ENCODE measurements at regions of chr17 and their contacts with region 1.

Region 1: DNA sequence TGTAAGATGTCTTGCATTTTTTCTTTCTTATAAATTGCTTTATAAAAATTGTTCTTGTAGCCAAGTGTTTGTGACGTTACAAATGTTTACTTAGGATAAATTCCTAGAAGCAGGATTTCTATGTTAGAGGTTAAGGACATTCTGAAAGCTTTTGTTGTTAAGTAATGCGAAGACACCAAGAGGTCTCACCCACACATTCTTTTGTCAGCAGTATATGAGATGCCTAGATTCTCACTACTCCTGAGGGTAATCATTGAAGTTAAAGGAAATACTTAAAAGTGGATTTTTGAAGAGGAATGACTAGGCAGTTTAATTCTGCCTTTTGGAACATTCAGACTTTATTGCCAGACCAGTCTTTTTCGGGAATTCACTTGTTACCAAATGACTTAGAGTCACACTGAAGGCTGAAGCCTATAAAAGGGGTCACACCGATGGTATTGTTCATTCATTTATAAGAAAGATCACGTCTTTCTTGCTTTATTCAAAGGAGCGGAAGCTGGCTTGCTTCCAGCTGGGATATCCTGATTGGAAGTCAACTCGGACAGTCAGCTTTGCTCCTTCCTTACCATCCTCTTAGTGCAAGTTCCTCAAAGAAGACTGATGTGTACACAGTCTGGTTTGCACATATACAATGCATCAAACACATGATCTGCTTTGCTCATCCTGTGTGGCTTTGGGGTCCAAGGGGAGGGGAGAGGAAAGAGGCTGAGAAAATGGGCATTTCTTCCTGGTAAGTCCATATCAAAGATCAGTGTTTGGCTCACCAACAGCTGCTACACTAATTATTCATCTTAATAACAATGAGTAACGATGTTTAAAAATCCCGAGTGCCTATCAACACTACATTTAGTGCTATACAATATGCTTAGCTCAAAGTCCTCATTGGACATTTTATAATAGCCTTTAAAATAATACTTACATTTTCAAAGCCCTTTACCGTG is 160.0 kb downstream of the MAP2K6 start:
- DNase-seq: no peak
- H3K4me3 Mint-ChIP-seq: no peak overlapping the region
- H3K27ac Mint-ChIP-seq: no peak overlapping the region
- H3K4me1 Mint-ChIP-seq: no peaks in the 10 kb centered on the region
- H3K27me3 Mint-ChIP-seq: peaks cover 5% of the 10 kb centered on the region

Region 2: DNA sequence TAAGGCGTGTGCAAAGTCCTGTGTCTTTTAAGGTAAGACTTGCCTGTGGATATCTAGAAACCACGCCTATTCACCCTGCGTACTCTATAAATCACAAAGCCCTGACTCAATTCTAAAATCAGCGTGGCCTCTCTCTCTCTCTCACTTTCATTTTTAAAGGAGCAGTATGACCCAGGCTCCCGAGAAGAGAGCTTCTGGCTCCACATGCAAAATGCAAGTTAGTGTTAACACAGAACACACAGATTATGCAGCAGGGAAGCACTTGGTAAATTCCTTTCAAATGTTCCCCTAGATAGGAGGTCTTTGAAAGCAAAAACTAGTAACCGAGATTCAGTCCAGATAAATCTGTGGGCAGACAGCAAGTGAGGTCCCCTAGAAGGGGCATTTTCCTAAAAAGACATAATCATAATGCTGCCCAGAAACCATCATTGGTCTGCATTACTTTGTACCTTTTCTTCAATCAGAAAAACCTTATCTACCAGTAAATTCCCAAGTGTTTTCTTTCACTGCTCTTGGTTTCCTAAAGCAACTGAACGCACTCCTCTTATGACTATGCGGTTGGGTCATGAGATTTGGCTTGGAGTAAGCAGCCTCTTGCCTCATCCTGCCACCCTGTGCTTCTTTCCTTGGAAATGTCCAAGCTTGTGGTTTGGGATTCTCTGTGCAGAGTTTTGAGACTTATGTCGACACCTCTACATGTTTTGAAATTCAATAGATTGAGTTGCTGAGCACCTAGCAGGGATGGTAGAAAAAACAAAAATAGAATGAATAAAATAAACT is 563.1 kb after region 1 on chr17:
- CTCF ChIA-PET with region 1: no interaction called
- intact Hi-C with region 1: loop called (anchors 2 kb)
- DNase-seq: peak; percentile 59
- H3K4me3 Mint-ChIP-seq: no peak overlapping the region
- H3K27ac Mint-ChIP-seq: no peak overlapping the region
- H3K4me1 Mint-ChIP-seq: peaks cover 18% of the 10 kb centered on the region
- H3K27me3 Mint-ChIP-seq: no peaks in the 10 kb centered on the region

Region 3: GRCh38 chr17:70144260-70144846 is 569.8 kb after region 1 on chr17:
- CTCF ChIA-PET with region 1: interaction called, 9 read pairs
- intact Hi-C with region 1: loop called (anchors 1 kb)
- DNase-seq: no peak
- H3K4me3 Mint-ChIP-seq: no peak overlapping the region
- H3K27ac Mint-ChIP-seq: no peak overlapping the region
- H3K4me1 Mint-ChIP-seq: no peaks in the 10 kb centered on the region
- H3K27me3 Mint-ChIP-seq: peaks cover 2% of the 10 kb centered on the region

Region 4: DNA sequence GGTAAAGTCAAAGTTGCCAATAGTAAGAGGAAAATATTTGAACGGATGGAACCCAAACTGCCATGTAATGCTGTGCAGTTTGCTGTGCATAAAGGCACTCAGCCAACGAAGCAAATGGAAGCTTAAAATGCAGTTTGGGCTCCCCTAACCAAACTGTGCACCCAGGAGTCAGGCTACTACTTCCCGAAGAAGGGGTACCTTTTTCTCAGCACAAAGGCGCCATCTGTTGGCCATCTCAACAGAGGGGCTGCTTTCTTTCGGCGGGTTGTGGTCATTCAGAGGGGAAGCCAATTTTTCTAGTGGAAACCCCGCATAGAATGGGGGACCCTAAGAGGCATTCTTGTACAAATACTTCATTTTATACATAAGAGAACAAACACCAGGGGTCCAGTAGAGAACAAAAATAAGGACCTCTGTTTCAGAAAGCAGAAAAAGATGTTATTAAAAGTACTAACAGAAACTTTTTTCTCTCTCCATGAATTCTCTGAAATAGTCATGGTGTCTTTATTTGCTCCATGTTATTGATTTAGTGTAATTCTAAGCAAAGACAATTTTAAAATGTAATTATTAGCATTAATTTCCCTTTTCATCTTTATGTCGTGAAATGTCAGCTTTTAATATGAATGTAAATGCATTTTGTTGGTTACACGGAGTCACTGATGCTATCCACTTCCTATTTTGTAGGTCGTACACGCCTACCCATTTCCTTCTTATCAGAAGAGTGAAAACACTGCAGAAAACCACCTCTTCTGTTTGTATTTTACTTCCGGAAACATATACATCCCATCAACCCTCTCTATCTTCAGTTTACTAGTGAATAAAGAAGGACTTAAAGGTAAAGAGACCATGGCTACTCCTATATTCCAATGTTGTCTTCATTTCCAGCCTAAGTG is 1048.1 kb after region 1 on chr17:
- CTCF ChIA-PET with region 1: no interaction called
- intact Hi-C with region 1: loop called (anchors 1 kb)
- DNase-seq: peak; percentile 34
- H3K4me3 Mint-ChIP-seq: no peak overlapping the region
- H3K27ac Mint-ChIP-seq: no peak overlapping the region
- H3K4me1 Mint-ChIP-seq: peaks cover 3% of the 10 kb centered on the region
- H3K27me3 Mint-ChIP-seq: no peaks in the 10 kb centered on the region

Region 5: GRCh38 chr17:70629902-70630301 is 1055.4 kb after region 1 on chr17:
- CTCF ChIA-PET with region 1: no interaction called
- intact Hi-C with region 1: loop called (anchors 1 kb)
- DNase-seq: peak; percentile 25
- H3K4me3 Mint-ChIP-seq: no peak overlapping the region
- H3K27ac Mint-ChIP-seq: no peak overlapping the region
- H3K4me1 Mint-ChIP-seq: no peaks in the 10 kb centered on the region
- H3K27me3 Mint-ChIP-seq: no peaks in the 10 kb centered on the region

Measured in activated naive CD4-positive, alpha-beta T cell treated with anti-CD3 and anti-CD28 coated beads for 36 hours (primary cell).